ENCODE measurements at regions of chr13 and their contacts with region 1.

Region 1: DNA sequence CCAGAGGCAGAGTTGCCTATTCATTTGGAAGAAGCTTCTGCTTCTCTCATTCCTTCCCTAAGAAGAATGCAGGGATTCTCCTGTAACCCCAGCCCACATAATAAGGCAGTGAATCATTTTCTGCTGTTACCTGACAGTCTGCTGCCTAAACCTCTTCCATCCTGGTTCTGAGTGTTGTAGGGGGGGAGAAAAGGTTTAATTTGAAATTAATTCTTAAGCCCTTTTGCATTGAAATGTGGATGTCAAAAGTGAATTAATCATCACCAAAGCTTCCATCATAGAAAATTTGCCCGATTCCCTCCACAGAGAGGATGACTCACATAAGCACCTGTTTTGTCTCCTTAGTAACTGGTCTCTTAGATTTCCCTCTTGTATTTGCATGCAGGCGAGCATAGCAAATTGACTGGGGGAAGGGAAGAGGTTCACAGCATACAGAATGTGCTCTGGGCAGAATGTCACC is 146.7 kb upstream of the FNDC3A start:
- DNase-seq: peak; percentile 24
- ATAC-seq: peak; percentile 72
- H3K4me3 Mint-ChIP-seq: no peak overlapping the region
- H3K27ac Mint-ChIP-seq: no peak overlapping the region
- H3K4me1 Mint-ChIP-seq: peaks cover 43% of the 10 kb centered on the region
- H3K27me3 Mint-ChIP-seq: no peaks in the 10 kb centered on the region

Region 2: DNA sequence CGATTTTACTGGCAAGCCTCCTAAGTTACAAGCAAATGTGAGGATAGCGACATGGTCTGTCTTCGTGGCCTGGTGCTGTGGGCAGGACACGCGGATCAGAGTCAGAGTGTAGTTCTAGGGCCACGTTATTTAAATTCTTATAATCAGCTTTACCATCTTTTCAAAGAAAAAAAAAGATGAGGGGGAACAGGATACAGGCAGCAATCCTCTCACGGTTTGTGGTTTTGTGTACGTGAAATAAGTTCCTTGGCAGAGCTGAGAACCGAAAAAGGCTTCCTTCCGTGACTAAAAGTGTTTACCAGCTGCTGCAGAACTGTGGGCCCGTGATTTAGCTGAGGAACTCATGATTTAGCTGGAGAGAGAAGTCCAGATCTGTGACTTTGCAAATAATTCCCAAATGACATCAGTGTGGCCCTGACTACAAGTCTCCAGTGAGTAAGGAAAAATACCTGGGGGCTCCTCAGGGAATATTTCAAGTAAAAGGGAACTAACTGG is 323.3 kb before region 1 on chr13:
- CTCF ChIA-PET with region 1: no interaction called
- POLR2A ChIA-PET with region 1: no interaction called
- intact Hi-C with region 1: no loop called
- DNase-seq: peak; percentile 64
- ATAC-seq: peak; percentile 71
- H3K4me3 Mint-ChIP-seq: peak overlapping the region; percentile 22
- H3K27ac Mint-ChIP-seq: peak overlapping the region; percentile 85
- H3K4me1 Mint-ChIP-seq: peaks cover 57% of the 10 kb centered on the region
- H3K27me3 Mint-ChIP-seq: no peaks in the 10 kb centered on the region

Region 3: GRCh38 chr13:48804821-48805601 is 24.0 kb before region 1 on chr13:
- CTCF ChIA-PET with region 1: no interaction called
- POLR2A ChIA-PET with region 1: no interaction called
- intact Hi-C with region 1: loop called (anchors 1 to 2 kb)
- DNase-seq: peak; percentile 17
- ATAC-seq: peak; percentile 82
- H3K4me3 Mint-ChIP-seq: no peak overlapping the region
- H3K27ac Mint-ChIP-seq: peak overlapping the region; percentile 47
- H3K4me1 Mint-ChIP-seq: peaks cover 31% of the 10 kb centered on the region
- H3K27me3 Mint-ChIP-seq: peaks cover 5% of the 10 kb centered on the region

Region 4: DNA sequence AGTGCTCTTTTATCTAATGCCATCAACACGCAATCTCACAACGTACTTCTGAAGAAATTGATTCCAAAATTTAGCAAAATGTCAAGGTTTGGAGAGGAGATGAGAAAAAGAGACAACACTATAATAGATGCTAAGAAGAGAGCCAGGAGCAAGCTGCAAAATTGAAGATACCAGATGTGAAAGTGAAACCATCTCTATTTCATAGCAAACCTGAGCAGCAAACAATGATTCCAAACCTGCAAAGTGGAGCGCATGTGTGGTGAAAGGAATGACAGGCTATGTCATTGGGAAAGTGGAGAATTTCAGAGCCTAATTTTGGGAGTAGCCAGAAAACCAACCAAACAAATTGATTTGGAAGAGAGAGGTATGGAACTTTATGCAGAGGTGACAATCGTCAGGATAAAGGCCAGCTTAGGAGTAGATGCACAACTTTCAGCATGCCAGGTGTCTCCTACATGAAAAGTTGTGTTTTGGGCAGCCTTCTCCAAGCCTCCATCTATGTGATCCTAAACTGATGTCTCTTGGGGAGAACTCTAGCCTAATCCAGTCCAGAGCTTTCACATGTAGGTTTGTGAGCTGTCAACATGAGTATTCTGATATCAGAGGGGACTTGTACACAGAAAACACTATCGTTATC is 11.7 kb before region 1 on chr13:
- CTCF ChIA-PET with region 1: no interaction called
- POLR2A ChIA-PET with region 1: no interaction called
- intact Hi-C with region 1: loop called in 1 of 2 experiments (anchors 1 kb)
- DNase-seq: no peak
- ATAC-seq: no peak
- H3K4me3 Mint-ChIP-seq: no peak overlapping the region
- H3K27ac Mint-ChIP-seq: no peak overlapping the region
- H3K4me1 Mint-ChIP-seq: peaks cover 17% of the 10 kb centered on the region
- H3K27me3 Mint-ChIP-seq: no peaks in the 10 kb centered on the region

Region 5: DNA sequence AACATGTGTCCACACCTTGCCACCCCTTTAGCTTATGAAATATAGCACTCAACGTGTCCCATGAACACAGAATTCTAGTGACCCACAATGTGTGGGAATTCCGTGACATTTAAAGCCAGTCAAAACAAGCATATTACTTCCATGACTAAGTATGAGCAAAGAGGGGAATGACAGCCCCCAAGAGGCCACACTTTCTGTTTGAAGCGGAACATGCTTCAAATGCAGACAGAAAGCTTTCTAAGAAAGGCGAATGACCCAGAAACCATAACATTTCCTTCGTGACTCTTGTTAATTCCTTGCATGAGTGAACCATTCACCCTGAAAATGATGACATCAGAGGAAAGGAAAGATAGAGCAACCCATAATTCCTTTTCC is 24.7 kb after region 1 on chr13:
- CTCF ChIA-PET with region 1: interaction called, 6 read pairs
- POLR2A ChIA-PET with region 1: no interaction called
- intact Hi-C with region 1: loop called in 1 of 2 experiments (anchors 2 kb)
- DNase-seq: peak; percentile 50
- ATAC-seq: peak; percentile 82
- H3K4me3 Mint-ChIP-seq: no peak overlapping the region
- H3K27ac Mint-ChIP-seq: no peak overlapping the region
- H3K4me1 Mint-ChIP-seq: peaks cover 45% of the 10 kb centered on the region
- H3K27me3 Mint-ChIP-seq: peaks cover 9% of the 10 kb centered on the region

Region 6: DNA sequence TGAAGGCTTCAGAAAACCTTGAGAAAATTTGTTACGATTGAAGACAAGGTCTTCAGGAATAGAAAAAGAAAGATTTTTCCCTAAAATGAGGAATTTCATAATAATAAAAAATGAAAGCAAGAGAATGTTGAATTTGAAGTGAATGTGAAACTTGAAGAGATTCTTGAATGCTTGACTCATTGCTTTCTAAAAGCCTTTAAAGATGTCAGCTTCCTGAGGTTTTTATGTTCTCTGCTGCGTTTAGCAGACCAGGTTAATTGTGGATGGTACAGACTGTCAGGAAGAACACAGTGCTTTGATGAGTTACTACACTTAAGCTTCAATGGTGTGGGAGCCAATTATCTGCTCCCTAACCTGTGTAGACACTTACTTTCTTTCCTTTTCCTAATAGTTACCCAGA is 50.4 kb after region 1 on chr13:
- CTCF ChIA-PET with region 1: no interaction called
- POLR2A ChIA-PET with region 1: no interaction called
- intact Hi-C with region 1: loop called in 1 of 2 experiments (anchors 1 kb)
- DNase-seq: no peak
- ATAC-seq: no peak
- H3K4me3 Mint-ChIP-seq: no peak overlapping the region
- H3K27ac Mint-ChIP-seq: no peak overlapping the region
- H3K4me1 Mint-ChIP-seq: peaks cover 46% of the 10 kb centered on the region
- H3K27me3 Mint-ChIP-seq: peaks cover 6% of the 10 kb centered on the region

Region 7: DNA sequence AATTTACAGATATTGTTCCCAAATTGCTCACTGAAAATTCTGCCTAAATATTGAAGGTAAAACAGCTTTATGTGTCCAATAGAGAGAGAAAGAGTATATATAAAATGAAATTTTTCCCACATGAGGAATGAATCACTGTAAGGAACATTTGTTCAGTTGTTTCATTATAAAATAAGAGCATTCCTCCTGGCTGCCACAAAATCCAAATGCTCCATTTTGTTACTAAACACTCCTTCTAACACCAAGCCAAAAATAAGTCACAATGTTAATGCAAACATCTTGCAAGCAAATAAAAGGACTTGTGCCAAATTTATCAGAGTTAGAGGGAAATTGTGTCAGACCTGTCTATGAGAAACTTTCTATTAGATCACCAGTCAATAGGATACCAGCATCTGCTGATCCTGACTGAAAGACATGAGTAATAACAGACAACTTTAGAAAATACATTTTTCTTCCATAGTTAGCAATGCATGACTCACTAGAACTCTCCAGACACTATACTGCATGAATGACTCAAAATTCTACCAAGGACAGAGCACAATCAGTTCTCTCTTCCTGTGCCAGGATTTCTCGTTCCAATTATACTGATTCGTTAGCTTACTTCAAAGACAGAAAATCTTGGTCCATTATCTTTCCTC is 63.2 kb after region 1 on chr13:
- CTCF ChIA-PET with region 1: interaction called, 3 read pairs
- POLR2A ChIA-PET with region 1: no interaction called
- intact Hi-C with region 1: loop called (anchors 1 to 2 kb)
- DNase-seq: no peak
- ATAC-seq: peak; percentile 97
- H3K4me3 Mint-ChIP-seq: no peak overlapping the region
- H3K27ac Mint-ChIP-seq: peak overlapping the region; percentile 51
- H3K4me1 Mint-ChIP-seq: peaks cover 34% of the 10 kb centered on the region
- H3K27me3 Mint-ChIP-seq: peaks cover 7% of the 10 kb centered on the region